MCF 10A (cell line): ENCODE measurements at regions of chr7 and their contacts with region 1.

Region 1: DNA sequence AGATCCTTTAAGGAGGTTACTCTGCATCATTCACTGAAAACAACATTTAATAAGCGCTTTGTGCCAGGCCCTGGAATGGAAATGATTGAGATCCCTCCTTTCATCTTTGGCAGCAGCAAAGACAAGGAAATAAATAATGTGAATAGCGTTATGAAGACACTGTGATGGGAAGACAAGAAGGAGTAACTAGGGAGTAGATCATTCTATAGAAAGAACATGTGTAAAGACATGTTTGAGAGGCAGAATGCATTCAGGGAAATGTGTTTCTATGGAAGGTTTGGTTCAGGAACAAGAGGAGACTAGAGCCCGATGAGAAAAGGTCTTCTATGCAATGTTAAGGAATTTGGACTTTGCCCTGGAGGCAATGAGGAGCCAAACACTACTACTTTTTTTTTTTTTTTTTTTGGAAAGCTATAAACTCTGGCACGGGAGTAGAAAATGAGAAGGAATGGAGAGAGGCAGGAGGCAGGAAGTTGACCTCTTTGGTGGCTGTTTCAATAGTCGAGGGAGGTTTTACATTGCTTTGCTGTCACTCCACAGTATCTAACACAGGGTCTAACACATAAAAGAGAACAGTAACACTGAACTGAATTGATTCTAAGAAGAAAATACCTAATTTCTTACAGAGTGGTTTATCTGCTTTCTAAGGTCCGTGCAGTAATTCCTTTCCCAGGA is 44.9 kb downstream of the SMURF1 start:
- DNase-seq: peak; percentile 78
- H3K4me3 Mint-ChIP-seq: peak overlapping the region; percentile 22
- H3K27ac Mint-ChIP-seq: peak overlapping the region; percentile 33
- H3K4me1 Mint-ChIP-seq: peaks cover 41% of the 10 kb centered on the region
- H3K27me3 Mint-ChIP-seq: no peaks in the 10 kb centered on the region
- CTCF ChIP-seq: no peak

Region 2: GRCh38 chr7:99040104-99040958 is 58.6 kb before region 1 on chr7:
- CTCF ChIA-PET with region 1: no interaction called
- POLR2A ChIA-PET with region 1: no interaction called
- intact Hi-C with region 1: no loop called
- DNase-seq: peak; percentile 90
- H3K4me3 Mint-ChIP-seq: no peak overlapping the region
- H3K27ac Mint-ChIP-seq: peak overlapping the region; percentile 27
- H3K4me1 Mint-ChIP-seq: no peaks in the 10 kb centered on the region
- H3K27me3 Mint-ChIP-seq: no peaks in the 10 kb centered on the region
- CTCF ChIP-seq: peak; percentile 68

Region 3: DNA sequence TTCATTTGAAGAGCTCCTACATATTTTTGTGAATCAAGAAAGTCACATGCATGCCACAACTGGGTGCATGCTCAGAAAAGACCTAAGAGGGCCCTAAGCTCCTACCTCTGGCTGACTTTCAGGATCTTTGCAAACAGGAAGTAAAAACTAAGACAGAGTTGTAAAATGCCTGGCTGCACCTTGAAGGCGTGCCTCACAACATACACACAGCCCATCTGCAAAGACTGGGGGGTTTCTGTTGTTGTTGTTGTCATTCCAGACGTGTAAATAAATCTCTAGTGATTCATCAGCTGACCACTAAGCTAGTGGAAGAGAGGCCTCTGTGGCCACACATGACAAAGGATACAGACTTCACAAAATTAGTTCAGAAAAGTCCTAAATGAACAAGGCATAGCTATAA is 13.1 kb after region 1 on chr7:
- CTCF ChIA-PET with region 1: no interaction called
- POLR2A ChIA-PET with region 1: interaction called, 10 read pairs
- intact Hi-C with region 1: no loop called
- DNase-seq: no peak
- H3K4me3 Mint-ChIP-seq: no peak overlapping the region
- H3K27ac Mint-ChIP-seq: peak overlapping the region; percentile 47
- H3K4me1 Mint-ChIP-seq: peaks cover 40% of the 10 kb centered on the region
- H3K27me3 Mint-ChIP-seq: no peaks in the 10 kb centered on the region
- CTCF ChIP-seq: no peak

Region 4: DNA sequence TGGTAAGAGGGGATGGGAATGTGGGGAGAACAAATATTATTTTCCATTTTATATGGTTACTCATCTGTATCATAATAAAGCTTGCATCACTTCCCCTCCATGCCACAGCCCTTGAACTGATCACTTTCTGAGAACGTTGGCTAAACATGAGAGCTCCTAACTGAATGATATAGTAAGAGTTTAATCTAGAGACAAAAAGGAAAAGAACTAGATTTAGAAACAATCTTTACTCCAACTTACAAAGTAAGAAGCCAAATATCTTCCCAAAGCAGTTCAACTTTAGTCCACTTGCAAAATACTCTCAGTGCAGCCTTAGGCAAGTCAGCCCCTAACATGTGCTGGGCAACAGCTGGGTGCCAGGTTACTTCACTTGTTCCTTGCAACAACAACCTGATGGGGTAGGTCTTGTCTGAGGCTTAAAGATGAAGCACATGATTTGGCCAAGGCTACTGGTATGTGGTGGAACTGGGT is 24.6 kb after region 1 on chr7:
- CTCF ChIA-PET with region 1: interaction called, 12 read pairs
- POLR2A ChIA-PET with region 1: interaction called, 3 read pairs
- intact Hi-C with region 1: no loop called
- DNase-seq: peak; percentile 68
- H3K4me3 Mint-ChIP-seq: no peak overlapping the region
- H3K27ac Mint-ChIP-seq: peak overlapping the region; percentile 61
- H3K4me1 Mint-ChIP-seq: peaks cover 41% of the 10 kb centered on the region
- H3K27me3 Mint-ChIP-seq: no peaks in the 10 kb centered on the region
- CTCF ChIP-seq: no peak